Activated T-helper 1 cell treated with anti-CD3 and anti-CD28 coated beads, Interleukin-12 subunit alpha, Interleukin-12 subunit beta, Interleukin-2, Interleukin-4 antibody, amounts not matched to agents 30 ng/mL and 10 ng/mL and 1 ng/mL, durations not matched to agents 14 hours and 24 hours and 36 hours (primary cell): ENCODE measurements at regions of chr5 and their contacts with region 1.

Region 1: GRCh38 chr5:134370871-134371833 is at the start of gene UBE2B:
- DNase-seq: peak; percentile 95
- H3K4me3 Mint-ChIP-seq: peak within 1 kb of the TSS; percentile 99
- H3K27ac Mint-ChIP-seq: peak within 1 kb of the TSS; percentile 97
- H3K4me1 Mint-ChIP-seq: peaks cover 66% of the 10 kb centered on the region
- H3K27me3 Mint-ChIP-seq: peaks cover 2% of the 10 kb centered on the region
- total RNA-seq, gene UBE2B: 98.9 and 108 TPM in 2 replicates

Region 2: DNA sequence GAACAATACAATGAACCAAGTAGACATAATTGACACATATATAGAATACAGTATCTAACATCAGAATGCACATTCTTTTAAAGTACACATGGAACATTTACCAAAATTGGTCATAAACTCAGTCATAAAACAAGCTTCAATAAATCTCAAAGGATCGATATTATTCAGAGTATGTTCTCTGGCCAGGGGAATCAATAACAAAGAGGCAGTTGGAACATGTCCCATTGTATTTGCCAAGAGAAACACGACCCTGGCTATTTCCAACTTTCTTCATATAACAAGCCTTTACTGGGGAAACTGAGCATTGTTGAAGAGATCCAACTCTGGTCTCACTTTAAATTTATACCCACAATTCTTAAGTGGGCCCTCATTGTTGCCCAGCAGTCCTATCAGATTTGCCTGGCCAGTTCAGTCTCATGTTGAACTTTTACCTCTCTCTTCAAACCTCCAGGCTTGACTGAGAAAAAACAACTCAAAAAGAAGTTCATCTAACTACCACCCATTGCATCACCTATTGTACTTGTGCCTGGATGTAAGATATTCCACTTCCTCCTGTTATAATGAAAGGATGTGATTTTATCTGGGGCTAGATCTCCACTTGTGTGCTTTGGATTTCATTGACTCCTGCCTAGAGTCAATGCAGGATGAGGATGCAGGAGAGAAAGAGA is 1156.9 kb before region 1 on chr5:
- intact Hi-C with region 1: no loop called
- DNase-seq: no peak
- H3K4me3 Mint-ChIP-seq: no peak overlapping the region
- H3K27ac Mint-ChIP-seq: no peak overlapping the region
- H3K4me1 Mint-ChIP-seq: no peaks in the 10 kb centered on the region
- H3K27me3 Mint-ChIP-seq: peaks cover 2% of the 10 kb centered on the region

Region 3: GRCh38 chr5:134176511-134177368 is 194.4 kb before region 1 on chr5 and contains the start of gene SKP1:
- intact Hi-C with region 1: loop called (anchors 1 kb)
- DNase-seq: peak; percentile 85
- H3K4me3 Mint-ChIP-seq: peak within 1 kb of the TSS; percentile 96
- H3K27ac Mint-ChIP-seq: peak within 1 kb of the TSS; percentile 97
- H3K4me1 Mint-ChIP-seq: peaks cover 28% of the 10 kb centered on the region
- H3K27me3 Mint-ChIP-seq: peaks cover 6% of the 10 kb centered on the region
- total RNA-seq, gene SKP1: 259 and 265 TPM in 2 replicates

Region 4: DNA sequence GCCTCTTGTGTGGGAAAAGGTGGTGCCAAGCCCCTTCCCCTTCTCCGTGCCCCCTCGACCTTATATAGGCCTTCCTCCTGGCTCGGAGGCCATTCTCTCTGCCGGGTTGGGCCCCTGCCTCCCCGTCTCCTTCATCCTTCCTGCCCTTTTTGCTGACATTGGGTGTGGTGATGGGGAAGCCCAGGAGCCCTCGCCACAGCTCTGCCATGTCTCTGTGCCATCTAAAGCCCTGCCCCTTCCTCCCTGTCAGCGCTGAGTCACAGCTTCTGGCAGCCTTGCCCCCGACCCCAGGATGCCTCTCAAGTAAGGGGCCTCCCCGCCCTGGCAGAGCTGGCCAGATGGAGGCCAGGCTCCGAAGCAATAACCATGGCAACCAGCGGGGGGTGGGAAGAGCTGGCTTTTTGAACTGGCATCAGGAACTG is 184.7 kb after region 1 on chr5:
- intact Hi-C with region 1: loop called (anchors 1 kb)
- DNase-seq: peak; percentile 68
- H3K4me3 Mint-ChIP-seq: peak overlapping the region; percentile 76
- H3K27ac Mint-ChIP-seq: peak overlapping the region; percentile 97
- H3K4me1 Mint-ChIP-seq: peaks cover 33% of the 10 kb centered on the region
- H3K27me3 Mint-ChIP-seq: no peaks in the 10 kb centered on the region

Region 5: GRCh38 chr5:134603059-134603458 is 231.9 kb after region 1 on chr5:
- intact Hi-C with region 1: loop called (anchors 1 kb)
- DNase-seq: no peak
- H3K4me3 Mint-ChIP-seq: peak overlapping the region; percentile 6
- H3K27ac Mint-ChIP-seq: peak overlapping the region; percentile 36
- H3K4me1 Mint-ChIP-seq: peaks cover 44% of the 10 kb centered on the region
- H3K27me3 Mint-ChIP-seq: no peaks in the 10 kb centered on the region

Region 6: DNA sequence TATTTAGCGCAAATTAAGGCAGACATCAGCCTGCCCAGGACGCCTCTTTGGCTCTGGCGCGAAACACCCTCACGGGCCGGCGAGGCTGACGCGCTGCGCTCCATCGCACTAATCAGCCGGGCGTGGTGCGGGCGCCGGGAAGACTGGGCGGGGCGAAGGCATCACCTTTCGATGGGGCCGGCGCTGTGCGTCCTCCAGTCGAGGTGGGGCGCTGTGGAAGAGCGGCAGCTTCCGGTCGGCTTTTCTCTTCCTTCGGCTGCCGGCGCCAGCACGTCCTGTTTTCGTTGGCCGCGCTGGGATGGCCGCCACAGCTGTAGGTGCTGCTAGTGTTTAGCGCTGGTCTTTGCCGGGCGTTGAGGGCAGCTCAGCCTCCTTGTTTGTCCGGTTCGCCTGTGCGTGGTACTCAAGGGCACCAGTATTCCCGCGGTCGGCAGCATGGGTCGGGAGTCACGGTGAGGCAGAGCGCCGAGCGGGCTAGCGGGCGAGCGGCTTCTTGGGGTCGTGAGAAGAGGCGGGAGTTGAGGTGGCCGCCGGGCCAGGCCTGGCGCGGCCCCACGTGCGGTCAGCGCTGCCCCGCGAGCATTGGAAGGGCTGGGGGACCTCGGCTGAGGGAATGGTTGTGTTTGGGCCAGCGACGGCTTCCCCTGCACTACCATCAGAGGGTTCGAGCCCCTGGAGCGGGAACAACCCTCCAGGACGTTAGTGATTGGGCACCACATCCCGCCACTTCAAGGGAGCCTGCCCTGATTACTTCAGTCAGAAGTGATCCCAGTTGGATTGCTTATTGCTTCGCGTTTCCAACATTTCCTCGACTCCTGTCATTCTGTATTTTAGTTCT is 387.6 kb after region 1 on chr5 and contains the start of gene DDX46:
- intact Hi-C with region 1: loop called (anchors 1 kb)
- DNase-seq: peak; percentile 94
- H3K4me3 Mint-ChIP-seq: peak within 1 kb of the TSS; percentile 100
- H3K27ac Mint-ChIP-seq: peak within 1 kb of the TSS; percentile 99
- H3K4me1 Mint-ChIP-seq: peaks cover 28% of the 10 kb centered on the region
- H3K27me3 Mint-ChIP-seq: no peaks in the 10 kb centered on the region
- total RNA-seq, gene DDX46: 78.3 and 84.4 TPM in 2 replicates